CD8-positive, alpha-beta T cell (primary cell): ENCODE measurements at regions of chr1 and their contacts with region 1.

Region 1: GRCh38 chr1:145891587-145892485 is 6.2 kb upstream of the ANKRD35 start:
- DNase-seq: peak in 8 of 9 experiments; percentile 16 to 65 (median 54)
- ATAC-seq: peak; percentile 85
- H3K4me3 ChIP-seq: no peak overlapping the region
- H3K4me3 Mint-ChIP-seq: no peak overlapping the region
- H3K27ac ChIP-seq: no peak overlapping the region
- H3K27ac Mint-ChIP-seq: no peak overlapping the region
- H3K4me1 ChIP-seq: no peaks in the 10 kb centered on the region
- H3K4me1 Mint-ChIP-seq: peaks cover under 1% of the 10 kb centered on the region
- H3K27me3 ChIP-seq: no peaks in the 10 kb centered on the region
- H3K27me3 Mint-ChIP-seq: no peaks in the 10 kb centered on the region
- CTCF ChIP-seq: peak; percentile 69

Region 2: DNA sequence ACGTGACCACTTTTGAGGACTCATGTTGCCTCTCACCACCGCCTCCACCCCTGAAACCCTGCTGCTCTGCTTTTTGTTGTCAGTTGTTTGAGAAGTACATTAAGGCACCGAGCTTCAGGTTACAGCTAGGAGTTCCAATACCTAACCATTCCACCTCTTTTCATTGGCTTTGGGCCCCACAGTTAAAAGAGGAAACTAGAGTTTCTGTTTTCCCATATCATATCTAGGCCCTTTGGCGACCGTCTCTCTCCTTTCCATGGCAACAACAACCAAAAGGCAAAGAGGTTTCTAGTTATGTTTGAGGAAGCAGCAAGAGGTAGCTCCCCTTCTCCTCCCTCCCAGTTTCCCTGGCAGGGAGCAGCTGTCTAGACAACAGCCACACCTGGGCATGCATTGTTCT is 12.1 kb before region 1 on chr1:
- CTCF ChIA-PET with region 1: interaction called, 29 read pairs
- POLR2A ChIA-PET with region 1: no interaction called
- intact Hi-C with region 1: no loop called
- DNase-seq: no peak
- ATAC-seq: no peak
- H3K4me3 ChIP-seq: no peak overlapping the region
- H3K4me3 Mint-ChIP-seq: no peak overlapping the region
- H3K27ac ChIP-seq: no peak overlapping the region
- H3K27ac Mint-ChIP-seq: no peak overlapping the region
- H3K4me1 ChIP-seq: no peaks in the 10 kb centered on the region
- H3K4me1 Mint-ChIP-seq: peaks cover 2% of the 10 kb centered on the region
- H3K27me3 ChIP-seq: peaks cover 0 to 3% of the 10 kb centered on the region in 2 experiments
- H3K27me3 Mint-ChIP-seq: peaks cover 17% of the 10 kb centered on the region
- CTCF ChIP-seq: no peak

Region 3: GRCh38 chr1:145912128-145912641 is 20.3 kb after region 1 on chr1:
- CTCF ChIA-PET with region 1: interaction called, 17 read pairs
- POLR2A ChIA-PET with region 1: interaction called, 3 read pairs
- intact Hi-C with region 1: no loop called
- DNase-seq: no peak
- ATAC-seq: no peak
- H3K4me3 ChIP-seq: no peak overlapping the region
- H3K4me3 Mint-ChIP-seq: no peak overlapping the region
- H3K27ac ChIP-seq: no peak overlapping the region
- H3K27ac Mint-ChIP-seq: peak overlapping the region; percentile 10
- H3K4me1 ChIP-seq: peaks cover 4% of the 10 kb centered on the region
- H3K4me1 Mint-ChIP-seq: peaks cover 23% of the 10 kb centered on the region
- H3K27me3 ChIP-seq: no peaks in the 10 kb centered on the region
- H3K27me3 Mint-ChIP-seq: no peaks in the 10 kb centered on the region
- CTCF ChIP-seq: no peak

Region 4: GRCh38 chr1:146012737-146013403 is 121.0 kb after region 1 on chr1:
- CTCF ChIA-PET with region 1: interaction called, 22 read pairs
- POLR2A ChIA-PET with region 1: no interaction called
- intact Hi-C with region 1: loop called (anchors 1 kb)
- DNase-seq: peak; percentile 31 to 86 (median 61)
- ATAC-seq: peak; percentile 87
- H3K4me3 ChIP-seq: no peak overlapping the region
- H3K4me3 Mint-ChIP-seq: no peak overlapping the region
- H3K27ac ChIP-seq: no peak overlapping the region
- H3K27ac Mint-ChIP-seq: no peak overlapping the region
- H3K4me1 ChIP-seq: peaks cover 1% of the 10 kb centered on the region
- H3K4me1 Mint-ChIP-seq: peaks cover 4% of the 10 kb centered on the region
- H3K27me3 ChIP-seq: no peaks in the 10 kb centered on the region
- H3K27me3 Mint-ChIP-seq: peaks cover 3% of the 10 kb centered on the region
- CTCF ChIP-seq: peak; percentile 97

Region 5: DNA sequence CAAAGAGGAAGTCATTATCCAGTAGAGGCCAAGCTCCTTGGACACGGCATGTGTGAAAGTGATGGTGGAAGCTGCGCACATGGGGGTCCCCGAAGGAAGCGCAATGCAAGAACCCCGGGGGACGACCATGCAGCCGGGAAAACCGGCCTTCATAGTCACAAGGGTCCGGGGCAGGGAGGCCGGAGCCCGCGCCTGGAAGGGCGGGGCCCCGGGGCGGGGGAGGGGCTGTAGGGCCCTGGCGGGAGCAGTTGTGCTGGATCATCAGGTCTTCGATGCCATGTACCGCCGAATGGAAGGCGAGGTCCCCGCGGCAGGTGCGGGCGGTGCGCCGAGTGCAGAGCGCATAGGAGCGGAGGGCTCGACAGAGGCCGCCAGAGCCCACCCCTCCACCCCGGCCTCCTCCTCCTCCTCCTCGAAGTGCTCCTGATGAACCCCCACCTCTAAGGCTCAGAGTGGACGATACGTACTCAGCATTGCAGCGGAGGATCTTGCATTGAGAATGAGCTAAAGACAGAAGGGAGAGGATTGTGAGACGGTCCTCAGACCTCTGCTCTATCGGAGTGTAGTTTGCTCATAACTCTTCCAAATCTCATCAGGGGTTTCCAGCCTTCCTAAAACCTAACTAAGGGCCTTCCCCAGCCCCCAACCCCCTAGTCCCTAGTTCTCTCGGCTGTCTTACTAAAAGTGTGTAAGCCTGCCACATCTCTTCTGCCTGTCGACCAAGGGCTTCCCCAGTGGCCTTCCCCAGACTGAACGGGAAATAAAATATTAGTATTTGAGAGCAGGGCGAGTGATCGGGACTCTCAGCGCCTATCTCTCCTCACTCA is 127.6 kb after region 1 on chr1:
- CTCF ChIA-PET with region 1: interaction called, 15 read pairs
- POLR2A ChIA-PET with region 1: no interaction called
- intact Hi-C with region 1: no loop called
- DNase-seq: peak in 1 of 9 experiments; percentile 45
- ATAC-seq: peak; percentile 20
- H3K4me3 ChIP-seq: no peak overlapping the region
- H3K4me3 Mint-ChIP-seq: peak overlapping the region; percentile 37
- H3K27ac ChIP-seq: no peak overlapping the region
- H3K27ac Mint-ChIP-seq: no peak overlapping the region
- H3K4me1 ChIP-seq: no peaks in the 10 kb centered on the region
- H3K4me1 Mint-ChIP-seq: peaks cover 9% of the 10 kb centered on the region
- H3K27me3 ChIP-seq: peaks cover 10 to 14% of the 10 kb centered on the region in 2 experiments
- H3K27me3 Mint-ChIP-seq: peaks cover 38% of the 10 kb centered on the region
- CTCF ChIP-seq: no peak